ENCODE measurements at regions of chr19 and their contacts with region 1.

Region 1: GRCh38 chr19:11814029-11814699 is at the start of gene ZNF440:
- DNase-seq: peak; percentile 65 to 89 (median 77)
- ATAC-seq: peak; percentile 95
- H3K4me3 ChIP-seq: peak within 1 kb of the TSS; percentile 97
- H3K4me3 Mint-ChIP-seq: peak within 1 kb of the TSS; percentile 98
- H3K27ac ChIP-seq: peak within 1 kb of the TSS in 1 of 2 donors; percentile 5
- H3K27ac Mint-ChIP-seq: peak within 1 kb of the TSS; percentile 75
- H3K4me1 ChIP-seq: peaks cover 23% of the 10 kb centered on the region
- H3K4me1 Mint-ChIP-seq: peaks cover 33% of the 10 kb centered on the region
- H3K27me3 ChIP-seq: no peaks in the 10 kb centered on the region
- H3K27me3 Mint-ChIP-seq: no peaks in the 10 kb centered on the region
- CTCF ChIP-seq: no peak
- total RNA-seq, gene ZNF440: 5.8 to 6.8 TPM

Region 2: GRCh38 chr19:11659612-11660011 is 154.6 kb before region 1 on chr19:
- CTCF ChIA-PET with region 1: no interaction called
- POLR2A ChIA-PET with region 1: no interaction called
- intact Hi-C with region 1: no loop called
- DNase-seq: no peak
- ATAC-seq: no peak
- H3K4me3 ChIP-seq: no peak overlapping the region
- H3K4me3 Mint-ChIP-seq: no peak overlapping the region
- H3K27ac ChIP-seq: no peak overlapping the region
- H3K27ac Mint-ChIP-seq: no peak overlapping the region
- H3K4me1 ChIP-seq: no peaks in the 10 kb centered on the region
- H3K4me1 Mint-ChIP-seq: no peaks in the 10 kb centered on the region
- H3K27me3 ChIP-seq: no peaks in the 10 kb centered on the region
- H3K27me3 Mint-ChIP-seq: no peaks in the 10 kb centered on the region
- CTCF ChIP-seq: no peak

Region 3: DNA sequence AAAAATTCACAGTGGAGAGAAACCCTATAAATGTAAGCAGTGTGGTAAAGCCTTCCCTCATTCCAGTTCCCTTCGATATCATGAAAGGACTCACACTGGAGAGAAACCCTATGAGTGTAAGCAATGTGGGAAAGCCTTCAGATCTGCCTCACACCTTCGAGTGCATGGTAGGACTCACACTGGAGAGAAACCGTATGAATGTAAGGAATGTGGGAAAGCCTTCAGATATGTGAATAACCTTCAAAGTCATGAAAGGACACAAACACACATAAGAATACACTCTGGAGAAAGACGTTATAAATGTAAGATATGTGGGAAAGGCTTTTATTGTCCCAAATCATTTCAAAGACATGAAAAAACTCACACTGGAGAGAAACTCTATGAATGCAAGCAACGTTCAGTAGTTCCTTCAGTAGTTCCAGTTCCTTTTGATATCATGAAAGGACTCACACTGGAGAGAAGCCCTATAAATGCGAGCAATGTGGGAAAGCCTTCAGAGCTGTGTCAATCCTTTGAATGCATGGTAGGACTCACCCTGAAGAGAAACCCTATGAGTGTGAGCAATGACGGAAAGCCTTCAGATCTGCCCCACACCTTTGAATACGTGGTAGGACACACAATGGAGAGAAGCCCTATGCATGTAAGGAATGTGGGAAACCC is 18.2 kb after region 1 on chr19:
- CTCF ChIA-PET with region 1: no interaction called
- POLR2A ChIA-PET with region 1: no interaction called
- intact Hi-C with region 1: loop called in 1 of 2 experiments (anchors 1 kb)
- DNase-seq: no peak
- ATAC-seq: no peak
- H3K4me3 ChIP-seq: no peak overlapping the region
- H3K4me3 Mint-ChIP-seq: no peak overlapping the region
- H3K27ac ChIP-seq: no peak overlapping the region
- H3K27ac Mint-ChIP-seq: no peak overlapping the region
- H3K4me1 ChIP-seq: no peaks in the 10 kb centered on the region
- H3K4me1 Mint-ChIP-seq: no peaks in the 10 kb centered on the region
- H3K27me3 ChIP-seq: no peaks in the 10 kb centered on the region
- H3K27me3 Mint-ChIP-seq: no peaks in the 10 kb centered on the region
- CTCF ChIP-seq: no peak

Region 4: GRCh38 chr19:11848594-11849469 is 34.7 kb after region 1 on chr19 and contains the start of gene ZNF439:
- CTCF ChIA-PET with region 1: no interaction called
- POLR2A ChIA-PET with region 1: interaction called, 9 read pairs
- intact Hi-C with region 1: loop called (anchors 5 kb)
- DNase-seq: peak; percentile 71 to 94 (median 90)
- ATAC-seq: peak; percentile 100
- H3K4me3 ChIP-seq: peak within 1 kb of the TSS; percentile 61
- H3K4me3 Mint-ChIP-seq: peak within 1 kb of the TSS; percentile 93
- H3K27ac ChIP-seq: peak within 1 kb of the TSS in 1 of 2 donors; percentile 61
- H3K27ac Mint-ChIP-seq: peak within 1 kb of the TSS; percentile 83
- H3K4me1 ChIP-seq: peaks cover 20% of the 10 kb centered on the region
- H3K4me1 Mint-ChIP-seq: peaks cover 20% of the 10 kb centered on the region
- H3K27me3 ChIP-seq: no peaks in the 10 kb centered on the region
- H3K27me3 Mint-ChIP-seq: no peaks in the 10 kb centered on the region
- CTCF ChIP-seq: no peak
- total RNA-seq, gene ZNF439: 6.3 to 6.6 TPM